ENCODE measurements at regions of chr7 and their contacts with region 1.

Region 1: DNA sequence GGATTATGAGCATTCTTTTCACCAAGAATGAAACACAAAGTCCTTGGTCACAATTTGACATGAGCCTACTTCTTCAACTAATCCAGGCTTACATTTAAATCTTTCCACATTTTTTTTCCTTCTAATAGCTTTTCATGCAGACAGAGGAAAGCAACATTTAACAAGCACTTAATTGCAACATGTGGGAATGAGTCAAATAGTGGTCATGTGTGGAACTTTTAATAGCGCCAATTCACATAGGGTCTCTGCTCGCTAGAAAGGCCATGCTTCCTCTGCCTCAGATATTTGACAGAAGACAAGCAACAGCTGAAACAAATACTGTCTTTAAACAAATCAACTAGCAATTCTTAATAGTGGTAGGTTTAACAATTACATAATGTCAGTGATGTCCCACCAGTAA is 285.9 kb upstream of the ETV1 start:
- DNase-seq: no peak

Region 2: GRCh38 chr7:14236834-14237233 is 38.5 kb before region 1 on chr7:
- intact Hi-C with region 1: loop called in 1 of 2 experiments (anchors 2 kb)
- DNase-seq: no peak

Region 3: GRCh38 chr7:15475802-15476530 is 1200.6 kb after region 1 on chr7:
- intact Hi-C with region 1: no loop called
- DNase-seq: no peak

Measured in posterior vena cava (tissue), 2 donors.